Sigmoid colon (tissue), 7 donors: ENCODE measurements at regions of chr18 and their contacts with region 1.

Region 1: DNA sequence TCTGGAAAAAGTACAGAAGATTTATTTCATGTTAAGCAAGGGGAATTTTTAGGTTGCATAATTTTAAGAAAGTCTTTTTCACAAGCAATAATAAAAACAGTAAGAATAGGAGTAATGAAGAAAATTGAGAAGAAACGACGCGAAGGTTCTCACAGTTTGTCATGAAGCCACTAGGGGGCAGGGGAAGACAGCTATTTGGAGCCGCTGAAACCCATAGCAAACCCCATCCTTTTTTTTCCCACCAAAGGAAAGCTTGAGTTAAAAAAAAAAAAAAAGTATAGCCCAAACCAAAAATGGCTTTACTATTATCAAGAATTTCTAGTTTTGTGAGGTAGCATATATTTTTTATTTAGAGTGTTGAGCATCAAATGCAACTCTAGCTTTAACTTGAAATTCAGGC is 300.9 kb downstream of the PHLPP1 start:
- DNase-seq: no peak
- H3K4me3 ChIP-seq: no peak overlapping the region
- H3K27ac ChIP-seq: no peak overlapping the region
- H3K4me1 ChIP-seq: no peaks in the 10 kb centered on the region
- H3K27me3 ChIP-seq: peaks cover 0 to 4% (median 0%) of the 10 kb centered on the region in 3 donors
- CTCF ChIP-seq: peak; percentile 69 to 88 (median 76)
- EP300 ChIP-seq: no peak
- POLR2A ChIP-seq: no peak

Region 2: GRCh38 chr18:62976227-62976626 is 40.0 kb before region 1 on chr18:
- intact Hi-C with region 1: no loop called
- DNase-seq: no peak
- H3K4me3 ChIP-seq: no peak overlapping the region
- H3K27ac ChIP-seq: no peak overlapping the region
- H3K4me1 ChIP-seq: no peaks in the 10 kb centered on the region
- H3K27me3 ChIP-seq: no peaks in the 10 kb centered on the region
- CTCF ChIP-seq: no peak
- EP300 ChIP-seq: no peak
- POLR2A ChIP-seq: no peak

Region 3: GRCh38 chr18:63131106-63131958 is 115.1 kb after region 1 on chr18:
- intact Hi-C with region 1: loop called (anchors 5 kb)
- DNase-seq: peak; percentile 73
- H3K4me3 ChIP-seq: no peak overlapping the region
- H3K27ac ChIP-seq: peak overlapping the region in 1 of 4 donors; percentile 31
- H3K4me1 ChIP-seq: peaks cover 0 to 11% (median 9%) of the 10 kb centered on the region in 4 donors
- H3K27me3 ChIP-seq: no peaks in the 10 kb centered on the region
- CTCF ChIP-seq: peak; percentile 23 to 72 (median 63)
- EP300 ChIP-seq: no peak
- POLR2A ChIP-seq: no peak

Region 4: GRCh38 chr18:63325086-63325686 is 308.9 kb after region 1 on chr18:
- intact Hi-C with region 1: loop called (anchors 2 kb)
- DNase-seq: no peak
- H3K4me3 ChIP-seq: no peak overlapping the region
- H3K27ac ChIP-seq: no peak overlapping the region
- H3K4me1 ChIP-seq: peaks cover 0 to 19% (median 13%) of the 10 kb centered on the region in 4 donors
- H3K27me3 ChIP-seq: no peaks in the 10 kb centered on the region
- CTCF ChIP-seq: no peak
- EP300 ChIP-seq: no peak
- POLR2A ChIP-seq: no peak

Region 5: GRCh38 chr18:63439334-63439733 is 423.1 kb after region 1 on chr18:
- intact Hi-C with region 1: loop called (anchors 2 kb)
- DNase-seq: peak; percentile 76
- H3K4me3 ChIP-seq: no peak overlapping the region
- H3K27ac ChIP-seq: peak overlapping the region in 2 of 4 donors; percentile 24 to 32
- H3K4me1 ChIP-seq: peaks cover 0 to 25% (median 11%) of the 10 kb centered on the region in 4 donors
- H3K27me3 ChIP-seq: no peaks in the 10 kb centered on the region
- CTCF ChIP-seq: peak; percentile 54 to 80 (median 76)
- EP300 ChIP-seq: no peak
- POLR2A ChIP-seq: no peak

Region 6: GRCh38 chr18:63505566-63506335 is 489.5 kb after region 1 on chr18:
- intact Hi-C with region 1: loop called (anchors 10 kb)
- DNase-seq: no peak
- H3K4me3 ChIP-seq: no peak overlapping the region
- H3K27ac ChIP-seq: no peak overlapping the region
- H3K4me1 ChIP-seq: no peaks in the 10 kb centered on the region
- H3K27me3 ChIP-seq: no peaks in the 10 kb centered on the region
- CTCF ChIP-seq: peak in 3 of 4 experiments; percentile 25 to 55 (median 39)
- EP300 ChIP-seq: no peak
- POLR2A ChIP-seq: no peak